ENCODE measurements at regions of chr7 and their contacts with region 1.

Region 1: GRCh38 chr7:4650433-4651047 is 31.6 kb upstream of the FOXK1 start:
- DNase-seq: no peak
- H3K4me3 ChIP-seq: no peak overlapping the region
- H3K27ac ChIP-seq: no peak overlapping the region
- H3K4me1 ChIP-seq: no peaks in the 10 kb centered on the region
- H3K27me3 ChIP-seq: no peaks in the 10 kb centered on the region
- CTCF ChIP-seq: no peak
- POLR2A ChIP-seq: no peak

Region 2: DNA sequence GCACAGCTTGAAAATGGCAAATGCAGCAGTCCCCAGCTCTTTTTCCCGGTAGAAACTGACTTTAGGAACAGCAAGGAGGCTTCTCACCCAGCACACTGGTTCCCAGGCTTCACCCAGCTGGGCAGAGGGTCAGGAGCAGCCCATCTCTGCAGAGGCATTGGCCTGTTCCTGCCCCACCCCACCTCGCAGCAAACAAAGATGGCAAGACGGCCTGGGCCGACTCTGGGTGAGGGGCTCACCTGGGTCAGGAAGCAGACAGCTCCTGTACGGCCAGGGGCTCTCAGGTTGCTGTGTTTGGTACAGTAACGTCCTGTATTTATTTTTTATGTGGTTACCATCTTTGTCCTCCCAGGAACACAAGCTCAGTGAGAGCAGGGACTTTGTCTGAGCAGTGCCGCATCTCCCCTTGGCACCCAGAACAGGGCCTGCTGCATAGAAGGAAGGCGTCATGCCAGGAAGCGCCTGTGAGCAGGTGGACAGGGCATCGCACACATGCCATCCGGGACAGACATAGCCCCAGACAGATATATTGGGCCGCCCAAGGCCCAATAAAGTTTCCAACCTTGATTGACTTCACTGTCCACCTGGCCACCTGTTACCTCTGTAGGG is 553.4 kb before region 1 on chr7:
- CTCF ChIA-PET with region 1: no interaction called
- POLR2A ChIA-PET with region 1: no interaction called
- dilution Hi-C with region 1: no loop called
- intact Hi-C with region 1: no loop called
- DNase-seq: no peak
- H3K4me3 ChIP-seq: no peak overlapping the region
- H3K27ac ChIP-seq: no peak overlapping the region
- H3K4me1 ChIP-seq: no peaks in the 10 kb centered on the region
- H3K27me3 ChIP-seq: no peaks in the 10 kb centered on the region
- CTCF ChIP-seq: no peak
- POLR2A ChIP-seq: no peak

Region 3: GRCh38 chr7:4633012-4633411 is 17.5 kb before region 1 on chr7:
- CTCF ChIA-PET with region 1: no interaction called
- POLR2A ChIA-PET with region 1: no interaction called
- dilution Hi-C with region 1: no loop called
- intact Hi-C with region 1: no loop called
- DNase-seq: no peak
- H3K4me3 ChIP-seq: no peak overlapping the region
- H3K27ac ChIP-seq: no peak overlapping the region
- H3K4me1 ChIP-seq: peaks cover 3% of the 10 kb centered on the region
- H3K27me3 ChIP-seq: no peaks in the 10 kb centered on the region
- CTCF ChIP-seq: no peak
- POLR2A ChIP-seq: no peak

Region 4: DNA sequence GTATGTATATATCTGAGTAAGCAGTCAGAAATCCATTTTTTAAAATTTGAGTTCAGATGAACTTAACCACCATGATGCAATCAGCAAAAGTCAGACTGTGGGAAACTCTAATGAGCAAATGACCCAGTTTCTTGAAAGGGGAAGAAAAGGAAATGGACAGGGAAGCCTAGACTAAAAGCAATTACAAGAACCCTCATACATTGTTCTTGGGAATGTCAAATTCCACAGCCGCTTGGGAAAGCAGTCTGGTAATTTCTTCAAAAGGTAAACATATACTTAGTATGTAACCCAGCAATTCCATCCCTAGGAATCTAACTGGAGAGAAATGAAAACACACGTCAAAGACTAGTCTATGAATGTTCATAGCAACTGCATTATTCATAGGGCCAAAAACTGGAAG is 15.1 kb after region 1 on chr7:
- CTCF ChIA-PET with region 1: interaction called, 3 read pairs
- POLR2A ChIA-PET with region 1: interaction called, 20 read pairs
- dilution Hi-C with region 1: no loop called
- intact Hi-C with region 1: no loop called
- DNase-seq: peak; percentile 80
- H3K4me3 ChIP-seq: no peak overlapping the region
- H3K27ac ChIP-seq: peak overlapping the region; percentile 47
- H3K4me1 ChIP-seq: peaks cover 2% of the 10 kb centered on the region
- H3K27me3 ChIP-seq: no peaks in the 10 kb centered on the region
- CTCF ChIP-seq: no peak
- POLR2A ChIP-seq: no peak

Region 5: DNA sequence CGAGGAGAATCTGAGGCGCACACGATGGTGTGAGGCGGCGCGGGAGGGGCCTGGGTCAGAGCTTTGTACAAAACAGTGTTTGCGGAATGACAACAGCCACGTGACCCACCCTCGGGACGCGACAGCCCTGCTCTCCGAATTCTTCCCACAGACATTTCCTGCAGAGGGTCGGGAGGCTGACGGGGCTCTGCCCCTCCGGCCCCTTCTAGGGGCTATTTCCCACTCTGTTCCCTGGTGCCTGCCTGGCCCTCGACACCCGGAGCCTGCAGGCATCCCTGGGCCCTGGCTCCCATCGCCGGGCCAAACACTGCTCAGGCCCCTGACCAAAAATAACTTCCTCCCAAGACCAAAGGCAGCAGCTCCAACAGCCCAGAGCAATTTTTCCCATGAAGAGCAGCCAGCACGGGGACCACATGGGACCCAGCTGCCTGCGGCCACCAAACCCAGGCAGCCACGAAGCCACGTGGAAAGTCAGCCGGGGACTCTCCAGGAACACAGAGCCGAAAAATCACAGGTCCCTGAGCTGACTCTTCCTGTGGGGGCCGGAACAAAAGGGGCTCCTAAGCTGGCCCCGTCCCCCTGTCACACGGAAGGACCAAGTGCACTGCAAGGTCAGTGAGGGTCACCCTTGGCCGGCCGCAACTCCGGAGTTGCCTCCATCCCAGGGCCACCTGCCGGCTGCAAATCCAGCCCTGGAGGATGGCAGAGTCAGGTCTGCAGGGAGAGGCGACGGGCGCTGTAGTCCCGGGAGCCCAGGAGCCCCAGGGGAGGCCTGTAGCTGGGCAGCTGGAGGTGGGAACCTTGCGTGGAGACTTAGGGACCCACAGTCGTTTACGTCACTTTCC is 169.2 kb after region 1 on chr7:
- CTCF ChIA-PET with region 1: no interaction called
- POLR2A ChIA-PET with region 1: no interaction called
- dilution Hi-C with region 1: no loop called
- intact Hi-C with region 1: no loop called
- DNase-seq: no peak
- H3K4me3 ChIP-seq: no peak overlapping the region
- H3K27ac ChIP-seq: no peak overlapping the region
- H3K4me1 ChIP-seq: no peaks in the 10 kb centered on the region
- H3K27me3 ChIP-seq: no peaks in the 10 kb centered on the region
- CTCF ChIP-seq: no peak
- POLR2A ChIP-seq: no peak

Region 6: DNA sequence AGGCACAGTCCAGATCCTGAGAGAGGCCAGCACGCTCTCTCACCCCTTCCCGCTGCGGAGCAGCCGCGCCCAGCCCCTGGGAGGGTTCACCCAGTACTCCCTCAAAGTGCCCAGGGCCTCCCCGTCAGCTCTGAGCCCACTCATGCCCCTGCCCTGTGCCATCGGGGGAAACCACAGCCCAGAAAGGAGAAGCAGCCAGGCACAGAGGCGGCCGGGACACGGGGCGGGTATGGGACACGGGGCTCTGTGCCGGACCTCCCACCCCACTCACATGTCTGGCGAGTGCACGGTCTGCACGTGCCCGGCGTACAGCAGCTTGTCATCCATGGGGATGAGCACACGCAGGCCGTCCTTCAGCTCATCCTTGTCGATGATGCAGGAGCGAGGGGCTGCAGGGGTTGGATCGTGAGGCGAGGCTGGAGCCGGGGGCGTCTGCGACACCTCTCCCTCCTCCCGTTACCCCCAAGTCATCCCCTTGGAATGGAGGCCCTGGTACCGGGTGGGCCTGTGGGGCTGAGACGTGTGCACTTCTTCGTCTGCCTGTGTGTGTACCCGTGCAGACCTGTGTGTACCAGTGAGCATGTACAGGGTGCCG is 670.4 kb after region 1 on chr7:
- CTCF ChIA-PET with region 1: no interaction called
- POLR2A ChIA-PET with region 1: no interaction called
- dilution Hi-C with region 1: no loop called
- intact Hi-C with region 1: no loop called
- DNase-seq: no peak
- H3K4me3 ChIP-seq: no peak overlapping the region
- H3K27ac ChIP-seq: no peak overlapping the region
- H3K4me1 ChIP-seq: no peaks in the 10 kb centered on the region
- H3K27me3 ChIP-seq: no peaks in the 10 kb centered on the region
- CTCF ChIP-seq: no peak
- POLR2A ChIP-seq: no peak

Measured in endothelial cell of umbilical vein (primary cell).